ENCODE measurements at regions of chr15 and their contacts with region 1.

Region 1: DNA sequence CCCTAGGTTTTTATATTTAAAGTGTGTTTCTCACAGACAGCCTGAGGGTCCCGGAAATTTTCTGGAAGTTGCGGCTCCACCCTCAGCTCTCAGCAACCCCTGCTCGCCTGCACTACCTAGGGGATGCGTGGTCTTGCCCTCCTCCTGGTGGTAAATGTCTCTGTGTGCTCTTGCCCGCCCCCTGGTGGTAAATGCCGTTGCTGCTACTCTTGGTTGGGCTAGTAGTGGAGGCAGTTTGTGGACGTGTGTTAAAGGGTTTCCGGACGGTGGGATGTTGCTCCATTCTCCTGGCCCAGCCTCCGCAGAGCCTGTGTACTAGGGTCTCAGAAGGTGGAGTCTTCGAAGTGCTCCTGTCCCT is 27.4 kb downstream of the STOML1 start:
- DNase-seq: peak; percentile 90 to 92
- H3K4me3 ChIP-seq: no peak overlapping the region
- H3K27ac ChIP-seq: no peak overlapping the region
- H3K4me1 ChIP-seq: peaks cover 0 to 11% (median 5%) of the 10 kb centered on the region in 4 donors
- H3K27me3 ChIP-seq: no peaks in the 10 kb centered on the region
- CTCF ChIP-seq: peak; percentile 95 to 96

Region 2: GRCh38 chr15:73897441-73898261 is 67.1 kb before region 1 on chr15:
- intact Hi-C with region 1: loop called (anchors 10 kb)
- DNase-seq: peak; percentile 35 to 79
- H3K4me3 ChIP-seq: no peak overlapping the region
- H3K27ac ChIP-seq: no peak overlapping the region
- H3K4me1 ChIP-seq: peaks cover 0 to 9% (median 3%) of the 10 kb centered on the region in 4 donors
- H3K27me3 ChIP-seq: peaks cover 0 to 12% of the 10 kb centered on the region in 2 donors
- CTCF ChIP-seq: peak; percentile 83 to 89

Region 3: GRCh38 chr15:74307827-74308644 is 343.3 kb after region 1 on chr15:
- intact Hi-C with region 1: loop called (anchors 10 kb)
- DNase-seq: peak; percentile 34 to 76
- H3K4me3 ChIP-seq: no peak overlapping the region
- H3K27ac ChIP-seq: no peak overlapping the region
- H3K4me1 ChIP-seq: no peaks in the 10 kb centered on the region
- H3K27me3 ChIP-seq: peaks cover 0 to 56% of the 10 kb centered on the region in 2 donors
- CTCF ChIP-seq: peak; percentile 63 to 75

Measured in tibial artery (tissue), 4 donors.